Right ventricle myocardium superior (tissue), 1 donor: ENCODE measurements at regions of chr16 and their contacts with region 1.

Region 1: DNA sequence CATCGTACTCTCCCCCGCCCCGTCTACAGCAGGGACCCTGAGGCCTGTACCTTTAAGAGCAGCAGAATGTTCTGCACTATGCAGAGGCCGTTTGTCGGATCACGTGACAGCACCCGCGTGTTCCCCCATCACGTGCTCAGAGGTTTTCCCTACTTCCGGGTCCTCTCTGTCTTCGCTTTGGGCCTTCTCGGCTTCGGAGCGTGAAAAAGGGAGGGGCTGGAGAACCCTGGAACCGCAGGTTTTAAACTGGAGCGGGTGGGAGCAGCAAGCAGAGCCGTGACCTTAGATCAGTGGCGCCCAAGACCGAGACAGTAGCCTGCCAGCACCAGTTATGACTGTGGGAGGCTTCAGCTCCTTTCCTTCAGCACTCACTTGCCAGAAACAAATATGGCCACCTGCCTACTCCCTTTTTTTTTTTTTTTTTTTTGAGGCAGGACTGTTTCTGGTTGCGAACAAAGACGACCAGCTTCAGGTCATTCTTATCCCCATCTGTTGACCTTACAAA is at the start of gene CLN3:
- DNase-seq: peak; percentile 94
- ATAC-seq: peak; percentile 98
- total RNA-seq, gene CLN3: 11.5 TPM

Region 2: GRCh38 chr16:28277537-28278388 is 214.3 kb before region 1 on chr16:
- intact Hi-C with region 1: no loop called
- DNase-seq: peak; percentile 95
- ATAC-seq: peak; percentile 96

Region 3: GRCh38 chr16:28538733-28539596 is 46.9 kb after region 1 on chr16 and contains the start of gene NUPR1:
- intact Hi-C with region 1: loop called (anchors 5 kb)
- DNase-seq: peak; percentile 94
- ATAC-seq: peak; percentile 98
- total RNA-seq, gene NUPR1: 47.3 TPM

Region 4: GRCh38 chr16:28553776-28554633 is 62.0 kb after region 1 on chr16 and contains the start of gene SGF29:
- intact Hi-C with region 1: loop called (anchors 5 kb)
- DNase-seq: peak; percentile 95
- ATAC-seq: peak; percentile 97
- total RNA-seq, gene SGF29: 13.2 TPM